Left lung (tissue), 14 donors: ENCODE measurements at regions of chr11 and their contacts with region 1.

Region 1: DNA sequence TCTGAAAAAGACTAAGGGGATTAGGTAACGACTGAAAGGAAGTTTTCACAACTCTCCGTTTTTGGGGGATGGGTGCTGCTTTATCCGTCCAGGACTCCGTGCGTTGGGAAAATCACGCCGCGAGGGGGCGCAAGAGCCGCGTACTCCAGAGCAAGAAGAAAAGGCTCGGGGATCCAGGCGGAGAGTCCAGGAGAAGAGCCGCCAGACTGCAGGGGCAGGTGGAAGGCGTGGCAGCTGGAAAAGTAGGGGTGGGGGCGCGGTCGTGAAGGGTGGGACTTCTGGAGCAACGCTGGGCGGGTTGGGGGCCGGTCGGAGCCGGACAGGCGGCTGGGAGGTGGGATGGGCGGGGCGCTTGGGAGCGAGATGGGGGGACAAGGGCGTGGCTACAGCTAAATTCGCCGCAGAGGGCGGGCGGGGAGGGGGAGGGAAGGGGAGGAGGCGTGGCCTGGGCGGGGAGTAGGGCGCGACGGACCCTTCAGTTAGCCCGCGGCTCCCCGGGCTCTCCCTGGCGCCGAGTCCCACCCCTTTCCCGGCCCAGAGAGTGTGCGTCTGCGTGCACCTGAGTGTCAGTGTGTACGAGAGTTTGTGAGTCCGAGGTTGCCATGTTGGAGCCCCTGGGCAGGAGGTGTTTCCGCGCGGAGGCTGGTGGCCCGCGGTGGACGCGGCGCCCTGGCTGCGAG is 613 bp upstream of the ARHGEF17 start:
- DNase-seq: peak; percentile 97 to 99 (median 98)
- ATAC-seq: peak; percentile 74
- H3K4me3 ChIP-seq: peak overlapping the region; percentile 58 to 69
- H3K27ac ChIP-seq: peak overlapping the region; percentile 93 to 97
- H3K4me1 ChIP-seq: peaks cover 16 to 58% of the 10 kb centered on the region in 2 donors
- H3K27me3 ChIP-seq: peaks cover 0 to 20% of the 10 kb centered on the region in 2 donors
- CTCF ChIP-seq: peak; percentile 69 to 85

Region 2: DNA sequence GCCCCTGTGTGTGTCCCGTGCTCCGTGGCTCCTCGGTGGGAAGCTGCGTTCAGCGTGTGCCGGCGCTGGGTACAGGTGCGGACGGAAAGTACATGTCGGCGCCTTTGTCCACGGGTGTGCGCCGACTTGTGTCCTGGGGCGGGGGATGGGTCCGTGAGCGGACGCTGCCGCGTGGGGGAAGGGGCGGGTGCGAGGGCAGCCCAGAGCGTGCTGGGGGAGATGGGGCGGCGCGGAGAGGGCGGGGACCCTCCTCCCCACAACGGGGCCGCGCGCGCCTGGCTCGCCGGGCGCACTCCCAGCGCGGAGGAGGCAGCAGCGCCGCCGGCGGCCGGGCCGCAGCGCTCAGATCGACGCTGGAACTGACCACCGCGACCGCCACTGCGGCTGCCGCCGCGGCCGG is 35.2 kb after region 1 on chr11:
- intact Hi-C with region 1: loop called in 1 of 2 experiments (anchors 5 kb)
- DNase-seq: peak in 2 of 4 donors; percentile 32 to 74
- ATAC-seq: peak; percentile 37
- H3K4me3 ChIP-seq: no peak overlapping the region
- H3K27ac ChIP-seq: no peak overlapping the region
- H3K4me1 ChIP-seq: peaks cover 0 to 10% of the 10 kb centered on the region in 2 donors
- H3K27me3 ChIP-seq: no peaks in the 10 kb centered on the region
- CTCF ChIP-seq: no peak